ENCODE measurements at regions of chr20 and their contacts with region 1.

Region 1: DNA sequence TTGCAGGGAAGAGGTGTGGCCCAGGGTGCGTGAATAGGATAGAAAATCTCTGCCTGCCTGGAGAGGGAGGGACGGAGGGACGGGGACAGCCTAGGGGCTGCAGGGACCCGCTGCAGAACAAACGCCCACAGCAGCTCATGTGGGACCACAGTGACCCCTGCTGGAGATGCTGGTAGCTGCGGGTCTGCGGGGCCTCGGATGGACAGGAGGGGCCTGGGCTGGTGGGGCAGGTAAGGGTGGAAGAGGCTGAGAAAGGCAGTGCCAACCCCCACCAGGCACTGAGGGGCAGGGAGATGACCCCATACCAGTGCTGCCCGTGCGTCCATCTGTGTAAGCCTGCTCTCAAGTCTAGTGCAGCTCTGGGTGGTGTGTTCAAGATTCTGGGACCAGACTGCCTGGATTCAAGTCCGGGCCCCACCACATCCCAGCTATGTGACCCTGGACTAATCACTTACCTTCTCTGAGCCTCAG is 39.4 kb downstream of the KIAA1755 start:
- DNase-seq: no peak
- H3K4me3 ChIP-seq: no peak overlapping the region
- H3K27ac ChIP-seq: no peak overlapping the region
- H3K4me1 ChIP-seq: peaks cover 34% of the 10 kb centered on the region
- H3K27me3 ChIP-seq: no peaks in the 10 kb centered on the region
- CTCF ChIP-seq: peak; percentile 69 to 97

Region 2: DNA sequence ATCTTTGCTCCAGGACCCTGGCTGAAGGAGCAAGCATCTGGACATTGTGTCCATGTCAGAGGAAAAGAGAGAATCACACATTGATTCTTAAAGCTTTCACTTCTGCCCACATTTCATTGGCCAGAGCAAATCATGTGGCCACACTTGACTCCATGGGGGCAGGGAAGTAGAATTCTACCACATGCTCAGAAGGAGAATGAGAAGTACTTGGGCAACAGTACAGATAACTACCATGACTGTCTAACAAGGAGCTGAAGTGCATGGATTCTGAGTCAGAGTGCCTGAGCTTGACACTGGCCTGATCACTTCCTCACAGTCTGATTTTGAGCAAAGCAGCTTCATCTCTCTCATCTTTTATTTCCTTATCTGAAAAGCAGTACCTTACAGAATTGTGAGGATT is 998.1 kb before region 1 on chr20:
- CTCF ChIA-PET with region 1: interaction called, 14 read pairs
- dilution Hi-C with region 1: no loop called
- in situ Hi-C with region 1: no loop called
- intact Hi-C with region 1: no loop called
- DNase-seq: peak; percentile 76
- H3K4me3 ChIP-seq: no peak overlapping the region
- H3K27ac ChIP-seq: no peak overlapping the region
- H3K4me1 ChIP-seq: peaks cover under 1% of the 10 kb centered on the region
- H3K27me3 ChIP-seq: no peaks in the 10 kb centered on the region
- CTCF ChIP-seq: no peak

Region 3: GRCh38 chr20:37901654-37902503 is 319.3 kb before region 1 on chr20:
- CTCF ChIA-PET with region 1: no interaction called
- dilution Hi-C with region 1: no loop called
- in situ Hi-C with region 1: no loop called
- intact Hi-C with region 1: loop called (anchors 1 kb)
- DNase-seq: peak; percentile 62
- H3K4me3 ChIP-seq: peak overlapping the region in 2 of 3 experiments; percentile 35 to 65
- H3K27ac ChIP-seq: no peak overlapping the region
- H3K4me1 ChIP-seq: peaks cover 7% of the 10 kb centered on the region
- H3K27me3 ChIP-seq: no peaks in the 10 kb centered on the region
- CTCF ChIP-seq: peak; percentile 27 to 57

Region 4: GRCh38 chr20:38057351-38057972 is 163.7 kb before region 1 on chr20:
- CTCF ChIA-PET with region 1: interaction called, 15 read pairs
- dilution Hi-C with region 1: no loop called
- in situ Hi-C with region 1: no loop called
- intact Hi-C with region 1: loop called (anchors 1 kb)
- DNase-seq: peak; percentile 53
- H3K4me3 ChIP-seq: no peak overlapping the region
- H3K27ac ChIP-seq: no peak overlapping the region
- H3K4me1 ChIP-seq: no peaks in the 10 kb centered on the region
- H3K27me3 ChIP-seq: no peaks in the 10 kb centered on the region
- CTCF ChIP-seq: peak; percentile 75 to 82

Region 5: DNA sequence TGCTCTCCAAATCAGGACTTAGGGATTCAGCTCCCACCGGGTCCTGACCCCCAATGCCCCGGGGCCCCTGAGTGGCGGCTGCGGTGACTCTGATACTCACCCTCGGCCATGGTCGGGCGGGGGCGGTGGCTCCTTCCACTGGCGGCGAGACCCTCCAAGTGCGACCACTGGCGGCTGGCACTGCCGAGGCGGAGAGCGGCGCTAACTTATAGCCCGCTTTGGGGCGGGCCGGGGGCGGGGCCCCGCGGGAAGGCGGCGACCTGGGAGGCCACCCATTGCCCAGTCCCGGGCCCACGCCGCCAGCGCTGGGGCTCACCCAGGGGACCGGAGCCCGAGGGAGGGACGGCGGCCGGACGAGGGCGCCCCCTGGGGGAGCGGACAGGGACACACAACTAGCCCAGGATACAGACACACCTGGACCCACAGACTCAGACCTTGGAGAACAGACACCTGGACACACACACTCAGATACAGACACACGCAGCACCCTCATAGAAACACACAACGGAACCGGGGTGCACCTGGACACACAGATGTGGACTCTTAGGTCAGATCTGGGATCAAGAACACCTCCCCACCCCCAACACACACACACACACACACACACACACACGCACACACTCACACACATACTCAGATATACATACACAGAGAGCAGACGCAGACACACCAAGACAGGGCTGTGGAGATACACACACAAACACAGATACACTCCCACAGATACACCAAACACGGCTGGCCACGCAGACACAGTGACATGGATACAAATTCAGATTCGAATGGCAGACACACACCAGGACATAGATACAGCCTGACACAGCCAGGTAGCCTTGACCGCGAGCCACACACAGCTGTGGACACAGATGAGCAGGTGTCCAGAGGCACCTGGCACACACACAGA is 55.8 kb before region 1 on chr20 and contains the start of gene TGM2:
- CTCF ChIA-PET with region 1: no interaction called
- dilution Hi-C with region 1: loop called (anchors 5 kb)
- in situ Hi-C with region 1: no loop called
- intact Hi-C with region 1: loop called (anchors 1 kb)
- DNase-seq: peak; percentile 71
- H3K4me3 ChIP-seq: peak within 1 kb of the TSS in 2 of 3 experiments; percentile 9 to 41
- H3K27ac ChIP-seq: peak within 1 kb of the TSS; percentile 4
- H3K4me1 ChIP-seq: peaks cover 56% of the 10 kb centered on the region
- H3K27me3 ChIP-seq: no peaks in the 10 kb centered on the region
- CTCF ChIP-seq: peak; percentile 47 to 76
- total RNA-seq, gene TGM2: 53.4 to 252 TPM

Region 6: GRCh38 chr20:38201356-38201755 is 19.8 kb before region 1 on chr20:
- CTCF ChIA-PET with region 1: no interaction called
- dilution Hi-C with region 1: no loop called
- in situ Hi-C with region 1: no loop called
- intact Hi-C with region 1: loop called (anchors 1 kb)
- DNase-seq: peak; percentile 94
- H3K4me3 ChIP-seq: no peak overlapping the region
- H3K27ac ChIP-seq: peak overlapping the region; percentile 26
- H3K4me1 ChIP-seq: peaks cover 43% of the 10 kb centered on the region
- H3K27me3 ChIP-seq: no peaks in the 10 kb centered on the region
- CTCF ChIP-seq: no peak

Region 7: DNA sequence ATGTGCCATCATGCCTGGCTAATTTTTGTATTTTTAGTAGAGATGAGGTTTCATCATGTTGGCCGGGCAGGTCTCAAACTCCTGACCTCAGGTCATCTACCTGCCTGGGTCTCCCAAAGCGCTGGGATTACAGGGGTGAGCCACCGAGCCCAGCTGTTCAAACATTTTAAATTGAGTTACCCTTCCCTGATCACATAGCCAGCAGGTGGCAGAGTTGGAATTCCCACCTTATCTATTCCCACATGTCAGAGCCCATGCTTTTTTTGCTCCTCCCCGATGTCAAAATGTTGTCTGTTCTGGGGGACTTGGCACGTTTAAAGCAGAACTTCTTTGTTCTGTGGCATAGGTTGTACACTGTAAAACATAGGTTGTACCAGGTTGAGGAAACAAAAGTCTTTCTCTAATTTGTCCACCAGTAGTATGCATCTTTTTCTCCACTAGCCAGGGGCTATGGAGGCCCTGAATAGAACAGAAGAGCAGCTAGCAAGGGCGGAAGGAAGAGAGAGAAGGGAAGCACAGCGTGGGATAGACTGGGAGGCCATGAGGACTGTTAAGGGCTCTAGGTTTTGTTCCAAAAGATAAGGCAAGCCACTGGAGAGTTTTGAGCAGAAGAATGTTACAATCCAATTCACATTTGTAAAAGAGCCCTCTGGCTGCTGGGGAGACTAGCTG is 117.8 kb after region 1 on chr20:
- CTCF ChIA-PET with region 1: no interaction called
- dilution Hi-C with region 1: no loop called
- in situ Hi-C with region 1: no loop called
- intact Hi-C with region 1: no loop called
- DNase-seq: peak; percentile 34
- H3K4me3 ChIP-seq: no peak overlapping the region
- H3K27ac ChIP-seq: no peak overlapping the region
- H3K4me1 ChIP-seq: no peaks in the 10 kb centered on the region
- H3K27me3 ChIP-seq: no peaks in the 10 kb centered on the region
- CTCF ChIP-seq: peak; percentile 25 to 64

Measured in mammary epithelial cell (primary cell).